BJ (cell line): ENCODE measurements at regions of chr20 and their contacts with region 1.

Region 1: GRCh38 chr20:17873410-17874270 is 95.0 kb downstream of the SNX5 start:
- DNase-seq: peak; percentile 89
- H3K4me3 ChIP-seq: no peak overlapping the region
- H3K27me3 ChIP-seq: no peaks in the 10 kb centered on the region
- CTCF ChIP-seq: no peak

Region 2: DNA sequence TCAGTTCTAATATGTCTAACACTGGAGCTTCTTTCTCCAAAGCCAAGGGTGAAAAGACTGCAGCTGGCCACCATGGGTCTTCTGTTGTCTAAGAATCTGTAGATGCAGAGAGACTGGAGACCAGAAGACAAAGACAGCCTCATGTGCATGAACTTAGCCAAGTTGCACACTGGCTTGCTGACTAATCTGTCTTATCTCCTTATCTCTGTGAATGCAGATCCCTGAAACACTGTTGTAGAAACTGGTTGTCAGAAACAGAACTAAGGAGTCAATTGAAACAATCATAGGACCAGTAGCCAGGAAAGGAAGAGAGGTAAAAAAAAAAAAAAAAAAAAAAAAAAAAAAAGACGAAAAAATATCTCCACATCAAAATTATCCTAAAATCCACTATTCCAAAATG is 452.1 kb before region 1 on chr20:
- CTCF ChIA-PET with region 1: no interaction called
- POLR2A ChIA-PET with region 1: no interaction called
- DNase-seq: no peak
- H3K4me3 ChIP-seq: no peak overlapping the region
- H3K27me3 ChIP-seq: no peaks in the 10 kb centered on the region; the same call in none of the 2 replicates
- CTCF ChIP-seq: no peak

Region 3: DNA sequence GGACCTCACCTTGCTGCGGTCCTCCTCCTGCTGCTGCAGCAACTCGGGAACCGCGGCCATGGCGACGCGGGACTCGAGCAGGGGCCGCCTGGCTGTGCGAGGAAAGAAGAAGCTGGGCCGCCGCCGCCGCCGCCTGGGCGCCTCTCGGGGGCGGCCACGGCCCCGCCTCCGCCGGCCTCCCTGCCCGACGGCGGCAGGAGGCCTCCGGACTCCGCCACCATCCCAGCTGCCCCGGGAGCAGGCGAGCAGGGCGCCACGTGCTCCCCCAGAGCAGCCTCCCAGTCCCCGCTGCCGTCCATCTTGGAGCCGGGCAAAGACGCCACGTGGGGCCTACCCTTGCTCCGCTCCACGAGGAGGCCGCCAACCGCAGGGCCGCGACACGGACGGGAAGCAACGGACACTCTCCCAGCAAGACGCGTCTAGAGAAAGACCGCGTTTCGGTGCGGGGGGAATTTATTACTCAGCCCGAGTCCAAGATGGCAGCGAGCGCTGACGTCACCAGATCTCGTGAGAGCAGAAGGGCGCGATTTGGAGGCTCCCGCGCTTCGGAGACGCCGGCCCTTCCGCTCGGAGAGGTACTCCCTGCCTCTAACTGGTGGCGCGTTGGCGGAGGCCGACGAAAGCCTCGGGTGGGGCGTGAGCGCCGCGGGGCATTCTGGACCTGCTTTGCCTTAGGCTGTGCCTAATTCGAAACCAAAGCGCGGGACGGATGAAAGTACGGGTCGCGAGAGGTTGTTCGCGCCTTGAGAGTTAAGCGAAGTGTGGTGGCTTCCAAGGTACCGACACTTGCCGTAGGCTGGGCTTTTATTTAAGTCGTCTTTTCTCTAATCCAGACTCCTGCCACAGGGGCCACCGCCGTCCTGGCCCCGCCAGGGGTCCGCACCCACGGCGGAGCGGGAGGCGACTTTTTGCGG is 95.0 kb after region 1 on chr20 and contains the starts of genes MGME1 and SNX5:
- CTCF ChIA-PET with region 1: no interaction called
- POLR2A ChIA-PET with region 1: interaction called, 18 read pairs
- DNase-seq: peak; percentile 95
- H3K4me3 ChIP-seq: peak within 1 kb of the TSS; percentile 84
- H3K27me3 ChIP-seq: no peaks in the 10 kb centered on the region
- CTCF ChIP-seq: no peak
- polyA plus RNA-seq, gene MGME1: 7.2 and 10.0 TPM in 2 replicates
- polyA plus RNA-seq, gene SNX5: 52.7 and 91.1 TPM in 2 replicates